ENCODE measurements at regions of chr2 and their contacts with region 1.

Region 1: GRCh38 chr2:149087751-149088150 is 49.3 kb downstream of the LYPD6B start:
- DNase-seq: no peak
- H3K4me3 ChIP-seq: no peak overlapping the region
- H3K4me3 Mint-ChIP-seq: no peak overlapping the region
- H3K27ac ChIP-seq: no peak overlapping the region
- H3K27ac Mint-ChIP-seq: peak overlapping the region in 1 of 7 donors; percentile 18
- H3K4me1 ChIP-seq: peaks cover 51 to 63% of the 10 kb centered on the region in 2 donors
- H3K4me1 Mint-ChIP-seq: peaks cover 71% of the 10 kb centered on the region
- H3K27me3 ChIP-seq: no peaks in the 10 kb centered on the region
- H3K27me3 Mint-ChIP-seq: peaks cover 0 to 2% (median 1%) of the 10 kb centered on the region in 3 donors
- CTCF ChIP-seq: peak; percentile 10

Region 2: GRCh38 chr2:149050188-149050587 is 37.6 kb before region 1 on chr2:
- intact Hi-C with region 1: no loop called
- DNase-seq: no peak
- H3K4me3 ChIP-seq: no peak overlapping the region
- H3K4me3 Mint-ChIP-seq: no peak overlapping the region
- H3K27ac ChIP-seq: no peak overlapping the region
- H3K27ac Mint-ChIP-seq: no peak overlapping the region
- H3K4me1 ChIP-seq: no peaks in the 10 kb centered on the region
- H3K4me1 Mint-ChIP-seq: no peaks in the 10 kb centered on the region
- H3K27me3 ChIP-seq: no peaks in the 10 kb centered on the region
- H3K27me3 Mint-ChIP-seq: peaks cover 0 to 3% (median 3%) of the 10 kb centered on the region in 3 donors
- CTCF ChIP-seq: no peak

Region 3: DNA sequence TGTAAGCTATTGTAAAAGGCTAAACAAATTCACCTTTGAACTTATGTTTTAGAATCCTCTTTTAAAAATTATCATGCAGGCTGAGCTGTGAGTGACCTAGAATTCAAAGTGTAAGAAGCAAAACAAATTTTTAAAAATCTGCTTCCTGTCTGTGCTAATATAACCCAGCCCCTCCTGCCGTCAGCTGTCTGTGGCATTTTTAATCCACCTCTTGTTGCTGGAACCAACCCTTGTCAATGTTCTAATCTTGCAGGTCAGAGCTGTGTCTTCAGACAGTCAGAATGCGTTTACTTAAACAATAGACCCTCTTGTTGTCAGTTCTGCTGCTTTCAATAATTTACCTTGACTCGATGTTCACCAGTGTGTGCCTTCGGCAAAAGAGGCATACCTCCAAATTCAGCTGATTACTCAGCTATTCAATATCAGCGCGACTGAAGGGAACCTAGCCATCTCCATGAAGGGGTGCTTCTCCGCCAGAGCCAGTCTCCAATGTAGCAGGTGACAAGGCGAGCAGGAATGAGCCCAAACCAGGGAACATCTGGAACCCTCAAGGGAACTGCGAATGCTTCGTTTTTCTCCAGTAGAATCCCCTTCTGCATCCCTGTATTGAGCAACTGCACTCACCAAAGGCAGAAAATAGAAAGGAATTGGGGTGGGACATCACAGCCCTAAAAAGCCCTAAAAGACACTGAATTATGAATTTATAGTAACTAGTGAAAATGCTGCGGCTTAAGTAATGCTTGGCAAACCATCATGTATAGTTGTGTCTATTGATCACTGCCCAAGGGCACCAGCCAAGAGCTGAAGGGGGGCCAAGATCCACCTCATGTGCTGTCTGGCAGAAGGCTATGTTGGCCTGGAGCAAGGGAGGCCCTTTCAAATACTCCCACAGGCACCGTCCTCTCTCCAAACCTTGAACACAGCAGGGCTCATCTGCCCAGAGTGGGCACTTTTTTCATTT is 13.3 kb after region 1 on chr2:
- intact Hi-C with region 1: loop called in 1 of 2 experiments (anchors 2 kb)
- DNase-seq: no peak
- H3K4me3 ChIP-seq: no peak overlapping the region
- H3K4me3 Mint-ChIP-seq: no peak overlapping the region
- H3K27ac ChIP-seq: no peak overlapping the region
- H3K27ac Mint-ChIP-seq: no peak overlapping the region
- H3K4me1 ChIP-seq: no peaks in the 10 kb centered on the region
- H3K4me1 Mint-ChIP-seq: no peaks in the 10 kb centered on the region
- H3K27me3 ChIP-seq: no peaks in the 10 kb centered on the region
- H3K27me3 Mint-ChIP-seq: peaks cover 1 to 4% (median 2%) of the 10 kb centered on the region in 3 donors
- CTCF ChIP-seq: no peak

Region 4: DNA sequence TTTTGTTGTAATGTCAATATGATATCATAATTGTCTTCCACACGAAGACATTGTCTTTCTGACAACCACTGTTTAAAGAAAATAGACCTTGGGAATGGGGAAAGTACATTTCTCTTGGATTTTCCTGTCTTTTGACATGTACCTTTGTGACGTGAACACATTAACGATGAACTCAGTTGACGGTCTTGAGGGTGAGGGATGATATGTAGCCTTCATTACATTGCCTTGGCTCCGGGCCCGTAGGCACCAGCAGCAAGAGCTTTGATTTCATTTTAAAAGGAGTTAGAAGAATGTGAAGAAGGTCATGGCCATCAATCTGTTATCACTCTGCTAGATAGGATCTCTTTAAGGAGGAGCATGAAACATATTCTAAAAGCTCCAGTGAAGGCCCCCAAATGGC is 31.6 kb after region 1 on chr2:
- intact Hi-C with region 1: no loop called
- DNase-seq: no peak
- H3K4me3 ChIP-seq: no peak overlapping the region
- H3K4me3 Mint-ChIP-seq: no peak overlapping the region
- H3K27ac ChIP-seq: no peak overlapping the region
- H3K27ac Mint-ChIP-seq: no peak overlapping the region
- H3K4me1 ChIP-seq: no peaks in the 10 kb centered on the region
- H3K4me1 Mint-ChIP-seq: no peaks in the 10 kb centered on the region
- H3K27me3 ChIP-seq: peaks cover 3 to 5% of the 10 kb centered on the region in 2 donors
- H3K27me3 Mint-ChIP-seq: peaks cover 10 to 14% (median 12%) of the 10 kb centered on the region in 3 donors
- CTCF ChIP-seq: no peak

Region 5: GRCh38 chr2:149141046-149141445 is 53.3 kb after region 1 on chr2:
- intact Hi-C with region 1: no loop called
- DNase-seq: no peak
- H3K4me3 ChIP-seq: no peak overlapping the region
- H3K4me3 Mint-ChIP-seq: no peak overlapping the region
- H3K27ac ChIP-seq: no peak overlapping the region
- H3K27ac Mint-ChIP-seq: no peak overlapping the region
- H3K4me1 ChIP-seq: no peaks in the 10 kb centered on the region
- H3K4me1 Mint-ChIP-seq: peaks cover 12% of the 10 kb centered on the region
- H3K27me3 ChIP-seq: peaks cover 5 to 8% of the 10 kb centered on the region in 2 donors
- H3K27me3 Mint-ChIP-seq: peaks cover 5 to 16% (median 12%) of the 10 kb centered on the region in 3 donors
- CTCF ChIP-seq: no peak

Region 6: GRCh38 chr2:149160701-149161217 is 73.0 kb after region 1 on chr2:
- intact Hi-C with region 1: loop called in 1 of 2 experiments (anchors 10 kb)
- DNase-seq: peak; percentile 34 to 37 (median 35)
- H3K4me3 ChIP-seq: peak overlapping the region in 1 of 3 experiments; percentile 31
- H3K4me3 Mint-ChIP-seq: peak overlapping the region in 1 of 2 donors; percentile 61
- H3K27ac ChIP-seq: no peak overlapping the region
- H3K27ac Mint-ChIP-seq: peak overlapping the region in 5 of 7 donors; percentile 16 to 87 (median 79)
- H3K4me1 ChIP-seq: peaks cover 23 to 26% of the 10 kb centered on the region in 2 donors
- H3K4me1 Mint-ChIP-seq: peaks cover 31% of the 10 kb centered on the region
- H3K27me3 ChIP-seq: peaks cover 0 to 5% of the 10 kb centered on the region in 2 donors
- H3K27me3 Mint-ChIP-seq: peaks cover 1 to 14% (median 5%) of the 10 kb centered on the region in 3 donors
- CTCF ChIP-seq: no peak